Pancreas (tissue), 10 donors: ENCODE measurements at regions of chr7 and their contacts with region 1.

Region 1: DNA sequence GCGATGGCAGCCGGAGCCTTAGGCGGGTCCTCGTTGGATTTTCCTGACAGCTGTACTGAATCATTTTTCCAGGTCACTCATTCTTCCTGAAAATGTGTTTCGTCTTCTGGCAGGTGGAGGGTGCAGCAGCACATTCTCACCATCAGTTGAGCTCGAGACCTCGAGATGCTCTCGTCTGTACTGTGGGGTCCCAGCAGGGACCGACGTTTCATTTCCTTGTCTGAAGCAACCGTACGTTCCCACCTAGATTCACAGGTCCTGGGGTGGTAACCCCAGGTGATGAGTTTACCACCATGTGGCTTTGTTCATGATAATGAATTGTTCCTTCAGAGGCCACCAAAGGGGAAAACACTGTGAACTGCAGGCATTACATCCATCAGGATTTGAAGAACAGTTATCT is 298.5 kb upstream of the FOXK1 start:
- DNase-seq: no peak
- ATAC-seq: no peak
- H3K4me3 ChIP-seq: no peak overlapping the region
- H3K27ac ChIP-seq: no peak overlapping the region
- H3K4me1 ChIP-seq: no peaks in the 10 kb centered on the region
- H3K27me3 ChIP-seq: no peaks in the 10 kb centered on the region
- CTCF ChIP-seq: no peak

Region 2: DNA sequence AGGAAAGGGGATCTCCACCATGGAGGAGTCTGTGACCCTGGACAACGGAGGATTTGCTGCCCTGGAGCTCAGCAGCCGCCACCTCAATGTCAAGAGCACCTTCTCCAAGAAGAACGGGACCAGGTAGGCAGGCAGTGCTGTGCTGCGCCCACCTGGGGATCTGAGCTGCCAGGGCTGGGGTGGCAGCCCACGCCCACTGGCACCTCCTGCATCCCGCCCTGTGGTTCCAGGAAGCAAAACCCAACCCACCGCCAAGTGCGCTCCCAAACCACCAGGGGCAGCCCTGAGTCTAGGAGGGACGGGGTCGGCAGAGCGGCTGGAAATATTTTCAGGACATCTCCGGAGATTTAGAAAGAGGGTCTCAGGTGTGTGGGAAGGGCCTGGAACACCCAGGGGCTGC is 141.8 kb before region 1 on chr7:
- intact Hi-C with region 1: no loop called
- DNase-seq: no peak
- ATAC-seq: no peak
- H3K4me3 ChIP-seq: no peak overlapping the region
- H3K27ac ChIP-seq: no peak overlapping the region
- H3K4me1 ChIP-seq: no peaks in the 10 kb centered on the region
- H3K27me3 ChIP-seq: no peaks in the 10 kb centered on the region
- CTCF ChIP-seq: no peak

Region 3: DNA sequence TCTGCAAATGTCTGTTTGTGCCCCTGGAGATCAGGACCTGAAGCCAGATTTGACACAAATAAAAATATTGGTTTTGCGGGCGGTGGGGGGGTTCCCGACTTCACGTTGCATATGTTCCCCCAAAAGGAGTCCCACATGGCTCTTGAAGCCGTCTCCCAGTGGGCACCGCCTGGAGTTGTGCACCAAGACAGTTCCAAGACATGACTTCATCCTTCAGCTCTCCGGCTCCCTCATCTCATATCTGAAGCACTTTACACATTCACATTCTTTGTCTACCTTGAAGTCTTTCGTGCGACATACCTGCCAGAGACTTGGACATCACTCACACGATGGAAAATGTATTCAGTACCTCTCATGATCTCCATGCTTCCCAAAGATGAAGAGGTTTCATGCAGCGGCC is 64.3 kb before region 1 on chr7:
- intact Hi-C with region 1: loop called in 1 of 3 experiments (anchors 5 kb)
- DNase-seq: no peak
- ATAC-seq: no peak
- H3K4me3 ChIP-seq: no peak overlapping the region
- H3K27ac ChIP-seq: no peak overlapping the region
- H3K4me1 ChIP-seq: no peaks in the 10 kb centered on the region
- H3K27me3 ChIP-seq: no peaks in the 10 kb centered on the region
- CTCF ChIP-seq: no peak